Activated naive CD8-positive, alpha-beta T cell treated with anti-CD3 and anti-CD28 coated beads, Interleukin-2, amount 10 ng/mL, durations not matched to agents 7 days and 5 days (primary cell): ENCODE measurements at regions of chr16 and their contacts with region 1.

Region 1: GRCh38 chr16:70695331-70696070 is 9.6 kb upstream of the MTSS2 start:
- DNase-seq: peak; percentile 70
- ATAC-seq: peak; percentile 58
- H3K4me3 Mint-ChIP-seq: peak overlapping the region; percentile 67
- H3K27ac Mint-ChIP-seq: peak overlapping the region; percentile 93
- H3K4me1 Mint-ChIP-seq: peaks cover 21% of the 10 kb centered on the region
- H3K27me3 Mint-ChIP-seq: no peaks in the 10 kb centered on the region

Region 2: GRCh38 chr16:70638814-70639792 is 56.4 kb before region 1 on chr16:
- POLR2A ChIA-PET with region 1: no interaction called
- DNase-seq: no peak
- ATAC-seq: no peak
- H3K4me3 Mint-ChIP-seq: no peak overlapping the region
- H3K27ac Mint-ChIP-seq: no peak overlapping the region
- H3K4me1 Mint-ChIP-seq: no peaks in the 10 kb centered on the region
- H3K27me3 Mint-ChIP-seq: peaks cover 7% of the 10 kb centered on the region

Region 3: GRCh38 chr16:70737377-70738082 is 42.0 kb after region 1 on chr16:
- POLR2A ChIA-PET with region 1: interaction called, 37 read pairs
- DNase-seq: peak; percentile 85
- ATAC-seq: peak; percentile 85
- H3K4me3 Mint-ChIP-seq: peak overlapping the region; percentile 78
- H3K27ac Mint-ChIP-seq: peak overlapping the region; percentile 97
- H3K4me1 Mint-ChIP-seq: peaks cover 44% of the 10 kb centered on the region
- H3K27me3 Mint-ChIP-seq: no peaks in the 10 kb centered on the region